AG04450 (cell line): ENCODE measurements at regions of chr9 and their contacts with region 1.

Region 1: GRCh38 chr9:21455320-21455719 is 15.1 kb downstream of the IFNA1 start:
- DNase-seq: no peak
- H3K4me3 ChIP-seq: no peak overlapping the region
- H3K27ac ChIP-seq: no peak overlapping the region
- H3K27me3 ChIP-seq: no peaks in the 10 kb centered on the region
- CTCF ChIP-seq: peak; percentile 69

Region 2: DNA sequence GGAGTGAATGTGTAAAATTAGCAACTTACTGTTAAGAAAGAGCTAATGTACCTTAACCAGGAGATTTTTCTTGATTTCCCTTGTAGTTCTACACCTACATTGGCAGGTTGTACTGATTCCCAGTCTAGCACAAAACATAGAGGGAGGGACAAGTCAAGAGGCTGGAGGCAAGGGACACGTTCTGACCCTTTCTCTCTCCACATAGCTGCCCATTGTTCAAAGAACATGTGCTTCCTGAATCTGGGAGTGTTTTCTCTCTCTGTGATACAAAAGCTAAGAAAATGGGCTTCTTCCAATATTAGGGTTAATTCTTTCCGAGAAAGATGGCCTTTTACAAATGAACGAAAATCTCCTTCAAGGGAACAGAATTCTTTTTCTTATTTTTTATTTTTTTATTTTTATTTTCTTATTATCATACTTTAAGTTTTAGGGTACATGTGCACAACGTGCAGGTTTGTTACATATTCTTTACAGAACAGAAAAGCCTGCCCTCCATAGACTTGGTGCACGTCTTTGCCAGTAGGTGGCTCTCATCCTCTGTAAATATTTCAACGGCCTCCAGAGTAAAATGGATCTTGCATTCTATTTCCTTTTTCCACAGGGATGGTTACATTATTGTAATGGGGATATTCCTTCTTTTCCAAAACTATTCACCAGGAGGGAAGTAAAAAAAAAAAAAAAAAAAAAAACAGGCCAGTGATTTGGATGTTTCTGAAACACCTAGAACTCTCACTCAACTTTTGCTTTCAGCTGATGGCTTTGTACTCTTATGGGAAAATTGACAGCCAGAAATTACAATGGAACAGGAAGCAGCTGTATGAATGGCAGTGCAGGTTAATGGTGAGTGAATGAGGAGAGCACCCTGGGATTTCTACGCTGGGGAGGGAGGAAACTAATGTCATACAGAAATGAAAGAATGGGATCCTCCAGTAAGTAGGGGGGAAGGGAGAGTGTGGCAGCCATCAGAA is 137.1 kb before region 1 on chr9:
- CTCF ChIA-PET with region 1: interaction called, 10 read pairs
- POLR2A ChIA-PET with region 1: no interaction called
- DNase-seq: no peak
- H3K4me3 ChIP-seq: no peak overlapping the region
- H3K27ac ChIP-seq: no peak overlapping the region
- H3K27me3 ChIP-seq: peaks cover 5% of the 10 kb centered on the region
- CTCF ChIP-seq: peak; percentile 75

Region 3: DNA sequence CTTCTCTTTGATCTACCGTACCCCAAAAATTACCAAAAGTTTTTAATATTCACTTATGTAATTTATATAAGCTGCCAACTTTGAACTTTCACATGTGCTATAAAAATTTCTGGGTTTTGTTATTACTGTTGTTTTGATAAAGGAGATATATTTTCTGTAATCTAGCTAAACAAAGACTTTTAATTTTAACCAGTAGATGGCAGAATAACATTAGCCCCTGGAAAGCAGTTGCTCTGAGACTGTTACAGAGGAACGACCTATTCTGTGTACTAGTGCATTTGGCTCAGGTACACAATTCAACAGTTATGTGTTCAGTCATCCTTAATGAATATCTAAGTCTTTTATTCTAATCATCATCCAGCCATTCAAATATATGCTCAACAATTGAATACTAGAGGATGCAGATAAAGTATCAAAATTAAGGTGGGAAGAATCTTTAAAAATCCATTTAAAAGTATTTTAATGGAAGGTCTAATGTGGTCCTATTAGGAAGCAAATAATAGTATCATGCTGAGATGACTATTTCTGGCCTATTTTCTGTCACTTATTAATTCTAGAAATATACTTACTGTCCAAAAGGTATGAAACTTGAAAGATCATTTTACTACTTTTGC is 128.7 kb before region 1 on chr9:
- CTCF ChIA-PET with region 1: interaction called, 22 read pairs
- POLR2A ChIA-PET with region 1: no interaction called
- DNase-seq: no peak
- H3K4me3 ChIP-seq: no peak overlapping the region
- H3K27ac ChIP-seq: no peak overlapping the region
- H3K27me3 ChIP-seq: no peaks in the 10 kb centered on the region
- CTCF ChIP-seq: peak; percentile 75

Region 4: GRCh38 chr9:21334701-21335632 is 120.4 kb before region 1 on chr9 and contains the start of gene KLHL9:
- CTCF ChIA-PET with region 1: interaction called, 11 read pairs
- POLR2A ChIA-PET with region 1: no interaction called
- DNase-seq: peak; percentile 82
- H3K4me3 ChIP-seq: peak within 1 kb of the TSS; percentile 84
- H3K27ac ChIP-seq: peak within 1 kb of the TSS; percentile 81
- H3K27me3 ChIP-seq: no peaks in the 10 kb centered on the region
- CTCF ChIP-seq: no peak
- polyA plus RNA-seq, gene KLHL9: 32.4 and 42.2 TPM in 2 replicates

Region 5: GRCh38 chr9:21473236-21473635 is 17.9 kb after region 1 on chr9:
- CTCF ChIA-PET with region 1: interaction called, 10 read pairs
- POLR2A ChIA-PET with region 1: no interaction called
- DNase-seq: no peak
- H3K4me3 ChIP-seq: no peak overlapping the region
- H3K27ac ChIP-seq: no peak overlapping the region
- H3K27me3 ChIP-seq: no peaks in the 10 kb centered on the region
- CTCF ChIP-seq: 0 out of 2 replicates have a peak, but pooled peaks have one; percentile 16